CD4-positive, alpha-beta T cell (primary cell): ENCODE measurements at regions of chr9 and their contacts with region 1.

Region 1: GRCh38 chr9:121201738-121202533 is at the start of gene RAB14:
- DNase-seq: peak; percentile 100
- ATAC-seq: peak; percentile 89
- H3K4me3 ChIP-seq: peak within 1 kb of the TSS; percentile 75
- H3K4me3 Mint-ChIP-seq: peak within 1 kb of the TSS; percentile 96
- H3K27ac ChIP-seq: peak within 1 kb of the TSS; percentile 76 to 87
- H3K27ac Mint-ChIP-seq: peak within 1 kb of the TSS; percentile 91
- H3K4me1 ChIP-seq: peaks cover 11% of the 10 kb centered on the region
- H3K4me1 Mint-ChIP-seq: peaks cover 49% of the 10 kb centered on the region
- H3K27me3 ChIP-seq: no peaks in the 10 kb centered on the region
- H3K27me3 Mint-ChIP-seq: no peaks in the 10 kb centered on the region
- CTCF ChIP-seq: peak; percentile 62
- total RNA-seq, gene RAB14: 57.4 to 58.2 TPM

Region 2: DNA sequence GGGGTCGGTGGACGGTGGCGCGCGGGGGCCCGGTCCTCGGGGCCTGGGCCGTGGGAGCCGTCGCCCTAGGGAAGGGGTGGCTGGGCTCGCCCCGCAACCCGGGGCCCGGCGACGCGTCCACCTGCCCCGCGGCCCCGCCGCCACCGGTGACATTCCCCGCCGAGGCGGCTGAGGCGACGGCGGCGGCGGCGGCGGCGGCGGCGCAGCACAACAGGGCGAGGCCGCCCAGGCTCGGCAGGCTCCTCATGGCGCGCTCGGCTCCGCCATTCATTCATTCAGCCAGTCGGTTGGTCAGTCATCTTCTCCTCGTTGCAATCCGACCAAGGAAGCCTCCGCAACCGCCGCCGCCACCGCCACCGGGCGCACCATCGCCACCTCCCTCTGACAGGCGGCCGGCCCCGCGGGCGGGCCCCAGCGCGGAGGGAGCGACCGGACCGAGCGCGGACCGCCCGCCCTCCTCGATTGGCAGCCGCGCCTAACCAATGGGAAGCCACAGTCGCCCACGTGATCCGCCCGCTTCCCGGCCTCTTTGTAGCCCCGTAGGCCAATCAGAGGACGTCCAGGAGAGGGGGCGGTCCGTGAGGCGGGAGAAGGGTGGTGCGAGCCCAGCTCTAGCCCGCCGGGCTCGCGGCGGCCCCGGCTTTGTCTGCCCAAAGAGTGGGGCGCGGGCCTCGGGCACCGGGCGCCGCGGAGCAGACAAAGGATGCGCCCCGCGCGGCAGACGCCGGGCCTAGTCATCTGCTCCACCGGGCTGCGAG is 487.7 kb before region 1 on chr9 and contains the start of gene MEGF9:
- CTCF ChIA-PET with region 1: no interaction called
- POLR2A ChIA-PET with region 1: interaction called, 3 read pairs
- intact Hi-C with region 1: loop called in 1 of 2 experiments (anchors 5 kb)
- DNase-seq: peak; percentile 88 to 98 (median 94)
- ATAC-seq: peak; percentile 93
- H3K4me3 ChIP-seq: peak within 1 kb of the TSS; percentile 82
- H3K4me3 Mint-ChIP-seq: peak within 1 kb of the TSS; percentile 90
- H3K27ac ChIP-seq: peak within 1 kb of the TSS; percentile 56 to 60
- H3K27ac Mint-ChIP-seq: peak within 1 kb of the TSS; percentile 79
- H3K4me1 ChIP-seq: peaks cover 35% of the 10 kb centered on the region
- H3K4me1 Mint-ChIP-seq: peaks cover 39% of the 10 kb centered on the region
- H3K27me3 ChIP-seq: no peaks in the 10 kb centered on the region
- H3K27me3 Mint-ChIP-seq: no peaks in the 10 kb centered on the region
- CTCF ChIP-seq: no peak
- total RNA-seq, gene MEGF9: 4.0 to 4.5 TPM

Region 3: DNA sequence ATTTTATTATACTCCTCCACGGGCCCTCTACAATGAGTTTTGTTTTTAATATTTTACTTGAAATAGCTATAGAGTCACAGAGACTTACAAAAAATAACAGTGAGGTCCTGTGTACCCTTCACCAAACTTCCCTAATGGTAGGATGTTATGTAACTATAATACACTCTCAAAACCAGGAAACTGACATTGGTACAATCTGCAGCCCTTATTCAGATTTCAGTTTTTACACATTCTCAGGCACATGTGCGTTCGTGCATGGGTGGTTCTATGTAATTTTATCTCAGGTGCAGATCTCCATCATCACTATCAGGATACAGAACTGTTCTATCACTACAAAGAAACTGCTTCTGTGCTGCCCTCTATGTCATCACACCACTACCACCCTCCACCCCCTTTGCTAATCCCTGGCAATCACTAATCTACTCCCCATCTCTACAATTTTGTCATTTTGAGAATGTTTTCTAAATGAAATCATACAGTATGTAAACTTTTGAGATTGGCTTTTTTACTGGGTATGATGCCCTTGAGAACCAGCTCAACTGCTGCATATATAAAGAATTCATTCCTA is 16.7 kb before region 1 on chr9:
- CTCF ChIA-PET with region 1: interaction called, 3 read pairs
- POLR2A ChIA-PET with region 1: interaction called, 50 read pairs
- intact Hi-C with region 1: no loop called
- DNase-seq: no peak
- ATAC-seq: peak; percentile 43
- H3K4me3 ChIP-seq: no peak overlapping the region
- H3K4me3 Mint-ChIP-seq: no peak overlapping the region
- H3K27ac ChIP-seq: peak overlapping the region in 1 of 2 donors; percentile 42
- H3K27ac Mint-ChIP-seq: peak overlapping the region; percentile 74
- H3K4me1 ChIP-seq: peaks cover 11% of the 10 kb centered on the region
- H3K4me1 Mint-ChIP-seq: peaks cover 72% of the 10 kb centered on the region
- H3K27me3 ChIP-seq: no peaks in the 10 kb centered on the region
- H3K27me3 Mint-ChIP-seq: no peaks in the 10 kb centered on the region
- CTCF ChIP-seq: no peak

Region 4: GRCh38 chr9:121233906-121234901 is 32.3 kb after region 1 on chr9:
- CTCF ChIA-PET with region 1: no interaction called
- POLR2A ChIA-PET with region 1: no interaction called
- intact Hi-C with region 1: no loop called
- DNase-seq: peak in 2 of 14 experiments; percentile 22 to 41
- ATAC-seq: no peak
- H3K4me3 ChIP-seq: no peak overlapping the region
- H3K4me3 Mint-ChIP-seq: no peak overlapping the region
- H3K27ac ChIP-seq: no peak overlapping the region
- H3K27ac Mint-ChIP-seq: no peak overlapping the region
- H3K4me1 ChIP-seq: no peaks in the 10 kb centered on the region
- H3K4me1 Mint-ChIP-seq: no peaks in the 10 kb centered on the region
- H3K27me3 ChIP-seq: no peaks in the 10 kb centered on the region
- H3K27me3 Mint-ChIP-seq: no peaks in the 10 kb centered on the region
- CTCF ChIP-seq: no peak

Region 5: GRCh38 chr9:121369595-121370265 is 167.8 kb after region 1 on chr9 and contains the start of gene STOM:
- CTCF ChIA-PET with region 1: no interaction called
- POLR2A ChIA-PET with region 1: no interaction called
- intact Hi-C with region 1: loop called (anchors 5 kb)
- DNase-seq: peak in 12 of 14 experiments; percentile 47 to 89 (median 60)
- ATAC-seq: peak; percentile 52
- H3K4me3 ChIP-seq: peak within 1 kb of the TSS; percentile 98
- H3K4me3 Mint-ChIP-seq: peak within 1 kb of the TSS; percentile 89
- H3K27ac ChIP-seq: peak within 1 kb of the TSS; percentile 76 to 79
- H3K27ac Mint-ChIP-seq: peak within 1 kb of the TSS; percentile 89
- H3K4me1 ChIP-seq: peaks cover 16% of the 10 kb centered on the region
- H3K4me1 Mint-ChIP-seq: peaks cover 70% of the 10 kb centered on the region
- H3K27me3 ChIP-seq: no peaks in the 10 kb centered on the region
- H3K27me3 Mint-ChIP-seq: no peaks in the 10 kb centered on the region
- CTCF ChIP-seq: no peak
- total RNA-seq, gene STOM: 26.1 to 27.9 TPM

Region 6: GRCh38 chr9:121744002-121744686 is 542.2 kb after region 1 on chr9:
- CTCF ChIA-PET with region 1: no interaction called
- POLR2A ChIA-PET with region 1: no interaction called
- intact Hi-C with region 1: no loop called
- DNase-seq: peak in 6 of 14 experiments; percentile 4 to 56 (median 40)
- ATAC-seq: peak; percentile 70
- H3K4me3 ChIP-seq: no peak overlapping the region
- H3K4me3 Mint-ChIP-seq: no peak overlapping the region
- H3K27ac ChIP-seq: no peak overlapping the region
- H3K27ac Mint-ChIP-seq: no peak overlapping the region
- H3K4me1 ChIP-seq: peaks cover 4% of the 10 kb centered on the region
- H3K4me1 Mint-ChIP-seq: peaks cover 15% of the 10 kb centered on the region
- H3K27me3 ChIP-seq: no peaks in the 10 kb centered on the region
- H3K27me3 Mint-ChIP-seq: no peaks in the 10 kb centered on the region
- CTCF ChIP-seq: no peak